Caco-2 (cell line): ENCODE measurements at regions of chr3 and their contacts with region 1.

Region 1: DNA sequence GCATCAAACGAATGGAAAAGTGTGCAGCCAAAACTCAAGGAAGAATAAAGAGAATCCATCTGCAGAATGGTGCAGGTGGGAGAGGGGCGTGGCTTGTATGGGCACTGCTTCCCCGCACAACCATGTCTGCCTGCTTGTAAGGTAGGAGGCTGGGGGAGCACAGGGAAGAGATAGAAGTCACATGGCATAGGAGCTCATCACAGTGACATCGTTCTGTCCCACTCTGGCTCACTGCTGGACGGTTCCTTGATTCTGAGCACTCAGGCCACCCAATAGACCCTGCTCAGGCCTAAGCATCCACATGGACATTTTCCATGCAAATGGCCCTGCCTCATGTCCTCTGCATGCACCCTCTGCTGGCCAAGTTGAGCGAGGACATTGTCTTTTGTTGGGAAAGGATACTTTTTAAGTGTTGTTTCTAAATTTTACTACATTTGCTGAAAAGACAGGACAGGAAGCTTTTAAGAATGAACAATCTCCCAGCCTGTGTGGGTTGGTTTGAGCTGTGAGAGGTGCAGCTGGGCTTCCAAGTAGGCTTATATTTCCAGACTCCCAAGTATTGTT is 3.1 kb downstream of the MYLK start:
- DNase-seq: peak; percentile 54
- H3K4me3 ChIP-seq: no peak overlapping the region
- H3K4me3 Mint-ChIP-seq: no peak overlapping the region
- H3K27ac Mint-ChIP-seq: no peak overlapping the region
- H3K4me1 ChIP-seq: no peaks in the 10 kb centered on the region
- H3K4me1 Mint-ChIP-seq: no peaks in the 10 kb centered on the region
- H3K27me3 ChIP-seq: no peaks in the 10 kb centered on the region
- H3K27me3 Mint-ChIP-seq: peaks cover 1% of the 10 kb centered on the region
- CTCF ChIP-seq: peak; percentile 50 to 66

Region 2: GRCh38 chr3:123745184-123745855 is 135.8 kb before region 1 on chr3:
- CTCF ChIA-PET with region 1: no interaction called
- POLR2A ChIA-PET with region 1: no interaction called
- intact Hi-C with region 1: loop called (anchors 1 kb)
- DNase-seq: peak in 1 of 2 experiments; percentile 31
- H3K4me3 ChIP-seq: no peak overlapping the region
- H3K4me3 Mint-ChIP-seq: no peak overlapping the region
- H3K27ac Mint-ChIP-seq: no peak overlapping the region
- H3K4me1 ChIP-seq: peaks cover 10% of the 10 kb centered on the region
- H3K4me1 Mint-ChIP-seq: peaks cover 7% of the 10 kb centered on the region
- H3K27me3 ChIP-seq: no peaks in the 10 kb centered on the region
- H3K27me3 Mint-ChIP-seq: no peaks in the 10 kb centered on the region
- CTCF ChIP-seq: peak; percentile 9 to 43

Region 3: GRCh38 chr3:123750659-123751420 is 130.2 kb before region 1 on chr3:
- CTCF ChIA-PET with region 1: no interaction called
- POLR2A ChIA-PET with region 1: interaction called, 4 read pairs
- intact Hi-C with region 1: loop called (anchors 2 kb)
- DNase-seq: peak; percentile 75 to 87
- H3K4me3 ChIP-seq: no peak overlapping the region
- H3K4me3 Mint-ChIP-seq: peak overlapping the region; percentile 34
- H3K27ac Mint-ChIP-seq: peak overlapping the region; percentile 94
- H3K4me1 ChIP-seq: peaks cover 59% of the 10 kb centered on the region
- H3K4me1 Mint-ChIP-seq: peaks cover 33% of the 10 kb centered on the region
- H3K27me3 ChIP-seq: no peaks in the 10 kb centered on the region
- H3K27me3 Mint-ChIP-seq: no peaks in the 10 kb centered on the region
- CTCF ChIP-seq: no peak

Region 4: GRCh38 chr3:123799544-123800361 is 81.3 kb before region 1 on chr3:
- CTCF ChIA-PET with region 1: interaction called, 3 read pairs
- POLR2A ChIA-PET with region 1: no interaction called
- intact Hi-C with region 1: loop called (anchors 2 kb)
- DNase-seq: peak; percentile 52 to 55
- H3K4me3 ChIP-seq: peak overlapping the region; percentile 46
- H3K4me3 Mint-ChIP-seq: peak overlapping the region; percentile 73
- H3K27ac Mint-ChIP-seq: peak overlapping the region; percentile 53
- H3K4me1 ChIP-seq: peaks cover 26% of the 10 kb centered on the region
- H3K4me1 Mint-ChIP-seq: peaks cover 26% of the 10 kb centered on the region
- H3K27me3 ChIP-seq: no peaks in the 10 kb centered on the region
- H3K27me3 Mint-ChIP-seq: no peaks in the 10 kb centered on the region
- CTCF ChIP-seq: no peak

Region 5: DNA sequence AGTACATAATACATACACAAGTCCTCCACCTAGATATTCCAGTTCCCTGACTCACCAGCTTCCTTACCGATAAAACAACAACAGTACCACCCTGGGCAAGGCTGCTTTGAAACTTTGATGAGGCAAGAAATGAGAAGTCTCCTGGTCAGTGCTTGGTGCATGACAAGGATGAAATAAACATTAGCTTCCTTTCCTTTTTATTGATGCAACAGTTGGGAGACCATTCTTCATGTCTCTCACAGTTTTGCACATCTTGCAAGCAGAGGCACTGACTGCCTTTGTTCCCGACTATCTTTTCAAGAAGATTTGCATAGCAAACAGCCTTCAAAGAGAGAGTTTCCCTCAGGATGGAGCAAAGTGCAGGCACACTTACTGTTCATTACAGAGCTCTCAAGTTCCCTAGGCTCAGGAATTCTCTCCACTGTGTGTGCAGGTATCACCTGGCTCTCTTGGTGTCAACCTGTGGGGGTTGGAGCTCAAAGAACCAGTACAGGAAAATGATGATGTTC is 62.1 kb before region 1 on chr3:
- CTCF ChIA-PET with region 1: no interaction called
- POLR2A ChIA-PET with region 1: no interaction called
- intact Hi-C with region 1: loop called (anchors 1 kb)
- DNase-seq: peak; percentile 66 to 70
- H3K4me3 ChIP-seq: no peak overlapping the region
- H3K4me3 Mint-ChIP-seq: peak overlapping the region; percentile 35
- H3K27ac Mint-ChIP-seq: peak overlapping the region; percentile 43
- H3K4me1 ChIP-seq: peaks cover 37% of the 10 kb centered on the region
- H3K4me1 Mint-ChIP-seq: peaks cover 21% of the 10 kb centered on the region
- H3K27me3 ChIP-seq: no peaks in the 10 kb centered on the region
- H3K27me3 Mint-ChIP-seq: no peaks in the 10 kb centered on the region
- CTCF ChIP-seq: no peak

Region 6: DNA sequence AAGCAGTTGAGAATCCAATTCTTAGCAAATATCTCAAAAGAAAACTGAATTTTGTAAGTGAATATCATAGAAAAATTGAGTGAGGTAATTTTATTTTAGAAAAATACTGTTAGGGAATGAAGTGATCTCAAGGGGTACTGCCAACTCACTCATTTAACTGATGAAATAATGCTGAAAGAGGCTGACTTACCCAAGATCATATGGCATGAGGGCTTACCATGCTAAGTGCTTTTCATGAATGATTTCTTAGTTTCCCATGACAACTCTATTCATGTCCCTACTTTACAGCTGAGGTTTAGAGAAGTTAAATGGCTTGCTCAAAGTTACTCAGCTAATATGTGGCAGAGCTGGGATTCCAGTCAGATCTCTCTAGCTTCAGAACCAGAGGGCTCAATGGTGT is 49.4 kb after region 1 on chr3:
- CTCF ChIA-PET with region 1: no interaction called
- POLR2A ChIA-PET with region 1: no interaction called
- intact Hi-C with region 1: no loop called
- DNase-seq: no peak
- H3K4me3 ChIP-seq: no peak overlapping the region
- H3K4me3 Mint-ChIP-seq: no peak overlapping the region
- H3K27ac Mint-ChIP-seq: no peak overlapping the region
- H3K4me1 ChIP-seq: no peaks in the 10 kb centered on the region
- H3K4me1 Mint-ChIP-seq: no peaks in the 10 kb centered on the region
- H3K27me3 ChIP-seq: no peaks in the 10 kb centered on the region
- H3K27me3 Mint-ChIP-seq: no peaks in the 10 kb centered on the region
- CTCF ChIP-seq: no peak